ENCODE measurements at regions of chr14 and their contacts with region 1.

Region 1: GRCh38 chr14:88013750-88014349 is 8.9 kb downstream of the GPR65 start:
- H3K4me3 ChIP-seq: no peak overlapping the region
- H3K27ac ChIP-seq: no peak overlapping the region
- H3K4me1 ChIP-seq: no peaks in the 10 kb centered on the region
- CTCF ChIP-seq: peak; percentile 38; the same call in 1 of the 2 replicates

Region 2: DNA sequence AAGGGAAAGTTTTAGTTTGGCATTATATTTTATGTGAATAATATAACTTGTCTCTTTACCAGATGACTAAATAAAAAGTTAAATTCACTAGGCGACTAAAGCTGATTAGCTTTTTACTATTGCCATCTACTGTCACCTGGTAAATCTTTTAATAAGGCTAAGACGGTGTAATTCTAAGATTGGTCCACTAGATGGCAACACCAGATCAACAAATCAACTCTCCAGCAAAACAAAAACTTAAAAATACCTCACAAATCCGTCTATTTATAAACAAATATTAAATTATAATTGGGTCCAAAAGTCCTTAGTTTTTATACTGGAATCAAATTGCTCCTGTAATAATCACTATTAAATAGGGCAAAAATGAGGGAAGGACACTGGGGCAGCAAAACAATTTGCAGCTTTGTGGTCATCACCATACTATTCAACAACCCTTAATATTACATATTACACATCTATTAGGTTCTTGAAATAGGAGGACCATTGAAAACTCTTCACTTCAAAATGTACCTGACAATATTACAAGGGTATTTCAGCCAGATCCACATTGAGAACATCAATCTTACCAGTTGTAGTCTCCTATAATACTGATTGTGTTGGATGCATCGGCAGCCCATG is 68.8 kb before region 1 on chr14:
- CTCF ChIA-PET with region 1: interaction called, 30 read pairs
- POLR2A ChIA-PET with region 1: no interaction called
- H3K4me3 ChIP-seq: no peak overlapping the region
- H3K27ac ChIP-seq: no peak overlapping the region
- H3K4me1 ChIP-seq: no peaks in the 10 kb centered on the region
- CTCF ChIP-seq: no peak

Region 3: DNA sequence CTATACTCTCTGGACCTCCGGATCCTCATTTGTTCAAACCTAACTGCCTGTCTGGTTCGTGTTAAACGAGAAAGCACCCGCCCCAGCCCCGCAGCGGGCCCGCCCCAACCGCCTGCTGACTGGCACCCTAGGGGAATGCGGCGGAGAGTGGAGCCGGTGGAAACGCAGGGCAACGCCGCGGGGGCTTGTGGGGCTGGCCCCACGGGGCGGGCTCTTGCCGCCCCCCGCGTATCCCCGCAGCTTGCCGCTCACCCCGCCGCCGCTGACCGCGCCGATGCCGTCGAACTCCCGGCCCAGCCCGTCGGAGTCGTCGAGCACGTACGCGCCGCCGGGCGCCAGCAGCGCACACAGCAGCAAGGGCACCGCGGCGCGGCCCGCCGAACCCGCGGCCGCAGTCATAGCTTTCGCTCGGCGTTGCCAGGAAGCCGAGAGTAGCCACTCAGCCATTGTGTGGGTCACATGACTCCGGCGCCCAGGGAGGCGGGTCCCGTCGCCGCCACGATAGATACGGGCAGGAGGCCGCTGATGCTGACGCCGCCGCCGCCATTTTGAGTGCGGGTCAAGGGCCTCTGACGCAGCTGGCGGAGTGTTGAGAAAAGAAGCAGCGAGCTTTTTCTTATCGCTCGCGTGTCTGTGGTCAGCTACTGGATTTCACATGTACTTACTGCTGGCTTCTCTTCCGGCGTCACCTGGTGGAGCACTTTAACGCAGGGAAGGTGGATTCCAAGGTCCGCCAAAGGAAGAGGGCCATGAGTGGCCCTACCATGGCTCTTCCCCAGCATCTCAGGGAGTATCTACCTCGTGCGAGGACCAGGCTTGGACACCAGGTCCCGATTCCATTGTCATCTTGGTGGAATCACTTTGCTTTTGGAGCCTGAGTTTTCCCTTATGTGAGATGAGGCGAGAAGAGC is 20.9 kb before region 1 on chr14 and contains the start of gene GALC:
- CTCF ChIA-PET with region 1: interaction called, 16 read pairs
- POLR2A ChIA-PET with region 1: no interaction called
- H3K4me3 ChIP-seq: peak within 1 kb of the TSS; percentile 41
- H3K27ac ChIP-seq: peak within 1 kb of the TSS; percentile 52; the same call in 1 of the 2 replicates
- H3K4me1 ChIP-seq: no peaks in the 10 kb centered on the region
- CTCF ChIP-seq: no peak

Region 4: DNA sequence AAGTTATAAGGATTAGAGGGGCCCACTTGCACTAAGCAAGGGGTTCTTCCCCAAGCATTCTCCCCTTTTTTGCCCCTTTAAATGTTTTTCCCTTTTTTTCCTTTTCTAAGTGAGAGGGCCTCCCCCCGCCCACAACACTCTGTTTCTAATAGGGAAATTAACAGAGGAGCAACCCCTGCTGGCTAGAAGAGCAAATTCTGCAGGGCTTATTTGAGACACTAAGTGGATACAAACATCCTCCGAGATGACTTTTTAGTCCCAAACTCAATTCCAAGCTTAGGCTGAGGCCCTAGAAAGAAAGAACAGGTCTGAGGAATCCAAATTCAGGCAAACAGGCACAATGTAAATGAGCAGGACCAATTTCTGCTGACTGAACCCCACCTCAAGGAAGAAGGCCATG is 130.0 kb after region 1 on chr14:
- CTCF ChIA-PET with region 1: no interaction called
- POLR2A ChIA-PET with region 1: no interaction called
- H3K4me3 ChIP-seq: no peak overlapping the region
- H3K27ac ChIP-seq: no peak overlapping the region
- H3K4me1 ChIP-seq: no peaks in the 10 kb centered on the region
- CTCF ChIP-seq: no peak

Region 5: GRCh38 chr14:88168498-88169165 is 154.8 kb after region 1 on chr14:
- CTCF ChIA-PET with region 1: interaction called, 25 read pairs
- POLR2A ChIA-PET with region 1: no interaction called
- H3K4me3 ChIP-seq: no peak overlapping the region
- H3K27ac ChIP-seq: no peak overlapping the region
- H3K4me1 ChIP-seq: no peaks in the 10 kb centered on the region
- CTCF ChIP-seq: no peak